CD4-positive, alpha-beta T cell (primary cell): ENCODE measurements at regions of chr16 and their contacts with region 1.

Region 1: DNA sequence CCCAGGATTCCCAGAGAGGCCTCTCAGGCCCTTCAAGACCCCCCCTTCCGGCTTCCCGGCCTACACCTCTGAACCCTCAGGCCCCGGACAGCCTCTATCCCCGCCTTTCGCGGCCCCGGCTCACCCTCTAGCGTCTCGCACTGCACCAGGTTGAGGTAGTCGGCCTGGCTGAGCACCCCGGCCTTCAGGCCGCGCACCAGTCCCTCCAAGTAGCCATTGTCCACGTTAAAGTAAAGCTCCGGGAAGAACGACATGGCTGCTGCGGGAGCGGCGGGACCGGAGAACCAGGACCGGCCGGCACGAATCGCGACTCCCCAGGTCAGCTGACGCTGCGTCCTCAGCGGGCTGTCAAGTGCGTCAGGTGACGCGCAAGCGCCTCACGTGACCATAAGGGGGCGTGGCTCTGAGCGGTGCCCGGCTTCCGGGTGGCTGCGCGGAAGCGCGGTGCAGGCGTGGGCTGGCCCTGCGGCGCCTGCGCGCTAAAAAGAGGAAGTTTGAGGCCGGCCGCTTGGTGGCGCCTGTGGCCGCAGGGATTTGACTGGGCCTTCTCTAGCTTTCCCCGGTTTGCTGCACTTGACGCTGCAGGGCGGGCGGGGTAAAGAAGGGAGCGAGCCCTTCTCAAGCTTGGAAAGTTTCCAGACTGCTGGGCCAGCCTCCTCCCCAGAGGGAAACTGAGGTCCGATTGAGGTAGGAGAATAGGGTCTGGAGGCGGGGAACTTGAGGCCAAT is at the start of gene ATP6V0D1:
- DNase-seq: peak; percentile 96 to 100 (median 99)
- ATAC-seq: peak; percentile 87
- H3K4me3 ChIP-seq: peak within 1 kb of the TSS; percentile 100
- H3K4me3 Mint-ChIP-seq: peak within 1 kb of the TSS; percentile 98
- H3K27ac ChIP-seq: peak within 1 kb of the TSS; percentile 98 to 100
- H3K27ac Mint-ChIP-seq: peak within 1 kb of the TSS; percentile 95
- H3K4me1 ChIP-seq: peaks cover 53% of the 10 kb centered on the region
- H3K4me1 Mint-ChIP-seq: peaks cover 54% of the 10 kb centered on the region
- H3K27me3 ChIP-seq: no peaks in the 10 kb centered on the region
- H3K27me3 Mint-ChIP-seq: no peaks in the 10 kb centered on the region
- CTCF ChIP-seq: peak; percentile 81
- total RNA-seq, gene ATP6V0D1: 39.4 to 41.7 TPM

Region 2: DNA sequence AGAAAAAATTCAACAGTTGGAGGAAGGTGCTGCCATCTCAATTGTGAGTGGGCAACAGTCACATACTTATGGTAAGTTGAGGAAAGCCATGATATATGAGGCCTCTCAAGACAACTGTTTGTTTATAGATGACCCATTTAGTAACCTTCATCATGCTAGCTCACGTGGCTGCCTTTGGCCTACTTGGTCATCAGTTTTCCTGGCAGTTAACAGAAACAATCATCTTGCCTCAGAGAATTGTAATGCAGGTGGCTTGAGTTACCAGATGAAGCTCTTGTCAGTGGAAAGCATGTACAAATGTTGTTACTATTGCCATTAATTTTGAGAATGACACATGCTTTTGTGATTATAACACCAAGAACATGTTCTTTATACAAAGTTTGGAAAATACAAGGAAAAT is 102.4 kb before region 1 on chr16:
- CTCF ChIA-PET with region 1: no interaction called
- POLR2A ChIA-PET with region 1: no interaction called
- intact Hi-C with region 1: no loop called
- DNase-seq: no peak
- ATAC-seq: no peak
- H3K4me3 ChIP-seq: no peak overlapping the region
- H3K4me3 Mint-ChIP-seq: no peak overlapping the region
- H3K27ac ChIP-seq: no peak overlapping the region
- H3K27ac Mint-ChIP-seq: no peak overlapping the region
- H3K4me1 ChIP-seq: no peaks in the 10 kb centered on the region
- H3K4me1 Mint-ChIP-seq: no peaks in the 10 kb centered on the region
- H3K27me3 ChIP-seq: no peaks in the 10 kb centered on the region
- H3K27me3 Mint-ChIP-seq: peaks cover 10% of the 10 kb centered on the region
- CTCF ChIP-seq: no peak

Region 3: DNA sequence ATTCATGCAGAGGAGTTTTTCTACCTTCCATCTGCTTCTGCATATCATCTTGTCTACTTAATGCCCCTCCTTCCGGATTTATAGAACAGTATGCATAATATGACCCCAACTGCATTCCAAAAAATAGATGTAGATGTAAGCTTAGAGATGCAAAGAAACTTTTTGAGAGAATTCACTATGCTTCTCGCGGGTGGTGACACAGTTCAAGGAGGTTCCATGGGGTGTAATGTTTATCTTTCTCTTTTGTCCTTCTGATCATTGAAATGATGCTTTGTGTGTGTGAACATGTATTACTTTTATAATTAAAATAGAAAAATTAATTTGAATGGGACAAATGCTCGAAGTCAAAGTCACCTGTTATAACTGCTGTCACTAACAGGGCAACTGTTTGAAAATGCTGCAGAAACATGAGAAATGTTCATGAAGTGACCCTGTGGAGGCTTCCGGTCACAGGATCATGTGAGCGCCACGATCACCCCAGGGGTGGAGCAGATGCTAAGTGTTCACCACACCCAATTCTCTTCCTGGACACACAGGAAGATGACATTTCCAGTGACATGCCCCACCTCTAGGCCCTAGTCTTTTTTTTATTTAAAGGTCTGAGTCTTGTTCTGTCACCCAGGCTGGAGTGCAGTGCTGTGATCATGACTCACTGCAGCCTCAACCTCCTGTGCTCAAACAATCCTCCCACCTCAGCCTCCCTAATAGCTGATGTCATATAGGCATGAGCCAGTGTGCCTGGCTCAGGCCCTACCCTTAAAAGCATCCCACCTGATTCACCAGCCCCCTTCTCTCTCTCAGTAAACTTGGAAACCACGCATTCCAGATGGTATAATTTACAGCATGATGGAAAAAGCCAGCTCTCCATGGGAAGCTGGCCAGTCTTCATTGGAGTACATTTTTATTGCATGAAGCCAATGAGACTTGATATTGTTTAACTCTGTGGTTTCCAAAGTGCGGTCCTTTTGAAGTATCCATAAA is 23.3 kb after region 1 on chr16:
- CTCF ChIA-PET with region 1: interaction called, 10 read pairs
- POLR2A ChIA-PET with region 1: interaction called, 6 read pairs
- intact Hi-C with region 1: no loop called
- DNase-seq: peak in 12 of 14 experiments; percentile 16 to 93 (median 34)
- ATAC-seq: peak; percentile 87
- H3K4me3 ChIP-seq: no peak overlapping the region
- H3K4me3 Mint-ChIP-seq: peak overlapping the region; percentile 52
- H3K27ac ChIP-seq: peak overlapping the region; percentile 53 to 79
- H3K27ac Mint-ChIP-seq: peak overlapping the region; percentile 91
- H3K4me1 ChIP-seq: peaks cover 58% of the 10 kb centered on the region
- H3K4me1 Mint-ChIP-seq: peaks cover 50% of the 10 kb centered on the region
- H3K27me3 ChIP-seq: no peaks in the 10 kb centered on the region
- H3K27me3 Mint-ChIP-seq: no peaks in the 10 kb centered on the region
- CTCF ChIP-seq: no peak

Region 4: DNA sequence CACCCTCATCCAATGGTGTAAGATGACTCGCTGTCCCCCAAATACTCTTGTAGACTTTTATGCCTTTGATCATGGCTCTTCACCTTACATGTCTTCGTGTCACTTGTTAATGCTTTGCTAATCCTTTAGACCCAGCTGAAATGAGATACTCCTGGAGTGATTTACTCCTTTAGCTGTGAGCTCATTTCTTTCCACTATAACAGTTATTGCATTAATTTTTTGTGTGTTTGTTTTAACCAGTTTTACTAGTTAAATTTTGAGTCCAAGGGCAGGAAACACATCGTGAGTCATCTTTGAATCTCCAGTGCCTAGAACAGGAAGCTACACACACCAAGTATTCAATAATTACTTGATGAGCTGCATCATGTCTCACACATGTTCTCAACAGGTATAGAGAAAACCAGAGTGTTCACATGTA is 74.8 kb after region 1 on chr16:
- CTCF ChIA-PET with region 1: interaction called, 11 read pairs
- POLR2A ChIA-PET with region 1: no interaction called
- intact Hi-C with region 1: no loop called
- DNase-seq: peak in 4 of 14 experiments; percentile 40 to 80 (median 71)
- ATAC-seq: peak; percentile 95
- H3K4me3 ChIP-seq: no peak overlapping the region
- H3K4me3 Mint-ChIP-seq: peak overlapping the region; percentile 80
- H3K27ac ChIP-seq: peak overlapping the region; percentile 71 to 77
- H3K27ac Mint-ChIP-seq: peak overlapping the region; percentile 91
- H3K4me1 ChIP-seq: peaks cover 54% of the 10 kb centered on the region
- H3K4me1 Mint-ChIP-seq: peaks cover 52% of the 10 kb centered on the region
- H3K27me3 ChIP-seq: no peaks in the 10 kb centered on the region
- H3K27me3 Mint-ChIP-seq: no peaks in the 10 kb centered on the region
- CTCF ChIP-seq: no peak

Region 5: DNA sequence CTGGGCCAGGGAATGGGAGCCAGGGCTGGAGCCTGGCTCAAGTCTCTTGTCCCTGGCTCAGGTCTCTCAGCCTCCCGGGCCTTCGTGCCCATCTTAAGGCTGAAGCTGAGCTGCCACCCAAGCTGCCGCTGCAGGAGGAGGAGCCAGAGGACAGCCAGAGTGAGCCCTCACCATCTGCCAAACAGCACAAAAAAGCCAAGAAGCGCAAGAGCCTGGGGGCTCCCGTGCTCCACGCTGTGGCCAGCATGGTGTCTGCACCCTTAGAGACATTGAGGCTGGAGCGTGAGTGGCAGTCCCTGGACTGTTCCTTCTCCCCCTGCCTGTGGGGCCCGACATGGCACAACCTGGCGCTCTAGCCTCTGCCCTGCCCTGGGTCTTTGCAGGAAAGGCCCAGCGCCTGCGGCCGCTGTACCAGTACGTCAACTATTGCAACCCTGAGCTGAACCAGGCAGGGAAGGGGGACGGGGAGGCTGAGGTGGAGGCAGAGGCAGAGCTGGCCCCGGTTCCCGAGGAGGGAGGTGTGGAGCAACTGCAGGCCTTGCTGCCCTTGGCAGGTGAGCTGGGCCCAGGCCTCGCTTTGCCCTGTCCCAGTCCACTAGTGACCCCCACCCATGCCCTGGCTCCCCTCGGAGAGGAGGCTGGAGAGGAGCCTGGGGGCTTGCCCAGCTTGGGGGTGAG is 187.0 kb after region 1 on chr16:
- CTCF ChIA-PET with region 1: interaction called, 5 read pairs
- POLR2A ChIA-PET with region 1: interaction called, 4 read pairs
- intact Hi-C with region 1: loop called in 1 of 2 experiments (anchors 5 kb)
- DNase-seq: peak; percentile 71 to 94 (median 81)
- ATAC-seq: peak; percentile 91
- H3K4me3 ChIP-seq: peak overlapping the region; percentile 65
- H3K4me3 Mint-ChIP-seq: peak overlapping the region; percentile 90
- H3K27ac ChIP-seq: peak overlapping the region; percentile 28 to 44
- H3K27ac Mint-ChIP-seq: peak overlapping the region; percentile 55
- H3K4me1 ChIP-seq: peaks cover 36% of the 10 kb centered on the region
- H3K4me1 Mint-ChIP-seq: peaks cover 28% of the 10 kb centered on the region
- H3K27me3 ChIP-seq: no peaks in the 10 kb centered on the region
- H3K27me3 Mint-ChIP-seq: no peaks in the 10 kb centered on the region
- CTCF ChIP-seq: peak; percentile 74